Activated naive CD4-positive, alpha-beta T cell treated with anti-CD3 and anti-CD28 coated beads for 36 hours (primary cell): ENCODE measurements at regions of chr10 and their contacts with region 1.

Region 1: DNA sequence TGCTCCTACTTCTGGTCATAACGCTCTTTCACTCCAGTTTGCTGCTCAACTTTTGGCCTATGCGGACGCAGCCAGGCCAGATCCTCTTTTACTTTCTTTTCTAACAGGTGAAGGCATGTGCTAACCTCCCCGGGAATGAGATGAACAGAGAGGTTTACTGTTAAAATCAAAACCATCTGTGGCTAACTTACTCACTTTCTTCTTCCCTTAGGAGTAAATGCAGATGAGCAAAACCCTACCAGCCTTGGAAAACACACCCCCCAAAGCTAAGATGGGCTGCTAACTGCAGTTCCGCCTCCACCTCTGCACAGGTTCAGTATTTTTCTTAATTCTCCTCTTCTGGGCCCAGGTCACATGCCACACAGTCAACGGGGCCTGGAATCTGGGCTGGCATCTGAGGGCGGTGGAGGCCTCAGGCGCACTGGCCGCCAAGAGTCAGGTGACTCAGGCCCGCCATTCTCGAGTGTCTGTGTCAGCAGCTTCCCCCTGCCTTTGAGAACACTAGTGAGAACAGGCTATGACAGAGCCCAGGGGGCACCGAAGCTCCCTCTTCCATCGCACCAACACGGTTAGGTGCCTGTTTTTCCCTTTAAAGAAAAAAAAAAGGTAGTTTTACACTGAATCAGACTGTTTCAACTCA is 11.1 kb downstream of the FAM53B start:
- DNase-seq: peak; percentile 82
- H3K4me3 Mint-ChIP-seq: peak overlapping the region; percentile 53
- H3K27ac Mint-ChIP-seq: peak overlapping the region; percentile 77
- H3K4me1 Mint-ChIP-seq: peaks cover 82% of the 10 kb centered on the region
- H3K27me3 Mint-ChIP-seq: no peaks in the 10 kb centered on the region

Region 2: GRCh38 chr10:124688889-124689670 is 44.0 kb before region 1 on chr10:
- CTCF ChIA-PET with region 1: interaction called, 3 read pairs
- intact Hi-C with region 1: loop called (anchors 2 kb)
- DNase-seq: peak; percentile 83
- H3K4me3 Mint-ChIP-seq: no peak overlapping the region
- H3K27ac Mint-ChIP-seq: peak overlapping the region; percentile 46
- H3K4me1 Mint-ChIP-seq: peaks cover 74% of the 10 kb centered on the region
- H3K27me3 Mint-ChIP-seq: no peaks in the 10 kb centered on the region

Region 3: DNA sequence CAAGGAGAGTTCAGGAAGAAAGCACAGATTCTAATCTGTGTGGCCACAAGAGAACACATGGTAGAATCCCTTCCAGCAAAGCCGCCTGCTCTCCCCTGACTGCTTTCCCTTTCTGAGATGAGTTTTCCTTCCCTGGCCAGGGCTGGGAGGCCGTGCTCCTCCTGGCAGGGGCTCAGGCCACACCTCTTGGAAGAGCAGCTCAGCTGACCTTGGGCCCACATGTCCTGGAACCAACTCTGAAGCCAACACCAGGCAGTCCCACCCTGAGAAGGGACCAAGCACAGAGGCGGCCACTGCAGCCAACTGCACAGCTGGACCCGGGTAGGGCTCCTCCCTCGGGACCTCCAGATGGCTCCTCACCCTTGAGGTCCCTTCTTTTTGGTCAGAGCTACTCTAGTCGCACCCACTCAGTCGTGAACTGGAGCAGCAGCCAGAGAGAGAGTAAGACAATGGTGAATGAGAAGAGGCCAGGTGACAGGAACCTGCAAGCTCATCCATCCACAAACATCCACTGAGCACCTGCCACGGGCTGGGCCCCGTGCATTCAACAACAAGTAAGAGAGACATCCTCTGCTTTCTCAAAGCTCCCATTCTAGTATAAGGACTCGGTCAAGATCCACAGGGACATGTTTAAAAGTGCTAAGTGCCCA is 29.1 kb before region 1 on chr10:
- CTCF ChIA-PET with region 1: interaction called, 20 read pairs
- intact Hi-C with region 1: loop called (anchors 1 kb)
- DNase-seq: no peak
- H3K4me3 Mint-ChIP-seq: no peak overlapping the region
- H3K27ac Mint-ChIP-seq: no peak overlapping the region
- H3K4me1 Mint-ChIP-seq: peaks cover 83% of the 10 kb centered on the region
- H3K27me3 Mint-ChIP-seq: no peaks in the 10 kb centered on the region

Region 4: DNA sequence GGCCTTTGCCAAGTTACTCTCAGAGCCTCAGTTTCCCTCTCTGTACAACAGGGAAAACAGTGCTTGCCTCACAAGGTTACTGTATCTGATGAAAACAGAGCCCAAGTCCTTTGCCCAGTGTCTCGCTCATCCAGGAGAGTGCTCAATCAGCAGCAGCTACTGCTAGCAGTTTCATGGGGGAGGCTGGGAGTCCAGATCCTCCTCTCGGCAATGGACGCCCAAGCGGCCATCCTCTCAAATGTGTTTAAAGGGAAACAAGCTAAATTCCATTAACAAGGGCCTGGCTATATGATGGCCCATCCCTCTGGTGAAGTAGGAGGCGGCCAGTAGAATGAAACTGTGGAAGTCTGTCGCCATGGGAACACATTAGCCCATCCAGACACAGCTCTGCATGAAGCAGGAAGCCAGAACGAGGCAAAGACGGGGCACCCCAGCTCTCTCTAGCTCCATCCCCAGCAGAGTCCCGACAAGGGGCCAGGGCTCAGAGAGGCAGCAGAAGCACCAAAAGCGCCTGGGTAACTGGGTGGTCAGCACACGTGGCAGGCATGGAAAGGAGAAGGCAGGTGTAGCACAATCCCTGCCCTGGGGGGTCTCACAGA is 24.0 kb before region 1 on chr10:
- CTCF ChIA-PET with region 1: interaction called, 20 read pairs
- intact Hi-C with region 1: no loop called
- DNase-seq: no peak
- H3K4me3 Mint-ChIP-seq: no peak overlapping the region
- H3K27ac Mint-ChIP-seq: no peak overlapping the region
- H3K4me1 Mint-ChIP-seq: peaks cover 67% of the 10 kb centered on the region
- H3K27me3 Mint-ChIP-seq: no peaks in the 10 kb centered on the region

Region 5: DNA sequence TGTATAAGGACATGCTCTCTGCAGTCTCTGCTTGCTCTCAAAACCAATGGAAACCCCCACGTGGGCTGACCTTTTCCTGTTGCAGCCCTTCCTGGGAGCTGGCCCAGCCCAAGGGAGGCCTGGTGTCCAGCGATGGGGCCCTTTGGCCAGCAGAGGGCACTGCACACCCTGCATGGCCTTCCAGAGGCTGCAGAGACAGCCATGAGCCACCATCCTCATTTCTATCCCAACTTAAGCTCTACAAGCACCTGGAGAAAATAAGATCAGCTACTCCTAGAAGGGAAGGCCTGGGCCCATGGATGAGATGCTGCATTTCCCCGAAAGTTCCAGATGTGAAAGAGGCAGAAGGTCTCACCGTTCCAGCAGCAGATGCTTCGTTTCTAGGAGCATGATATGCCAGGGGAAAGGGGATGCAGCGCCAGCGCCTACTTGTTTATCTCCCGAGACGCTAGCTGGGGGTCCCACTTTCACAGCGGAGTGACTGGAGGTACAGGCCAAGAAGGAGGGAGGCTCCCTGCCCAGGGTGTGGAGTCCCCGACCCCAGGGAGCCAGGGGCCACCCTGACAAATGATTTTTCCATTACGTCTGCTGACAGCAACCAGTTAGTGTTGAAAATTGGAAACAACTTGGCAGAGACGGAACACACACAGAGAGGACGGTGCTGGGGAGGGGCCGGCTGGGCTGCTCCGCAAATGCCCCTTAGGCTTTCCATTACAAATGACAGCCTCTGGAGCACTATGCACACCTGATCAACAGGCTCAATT is 315.2 kb after region 1 on chr10:
- CTCF ChIA-PET with region 1: no interaction called
- intact Hi-C with region 1: no loop called
- DNase-seq: peak; percentile 80
- H3K4me3 Mint-ChIP-seq: no peak overlapping the region
- H3K27ac Mint-ChIP-seq: no peak overlapping the region
- H3K4me1 Mint-ChIP-seq: no peaks in the 10 kb centered on the region
- H3K27me3 Mint-ChIP-seq: no peaks in the 10 kb centered on the region